Prostate gland (tissue), 2 donors: ENCODE measurements at regions of chr5 and their contacts with region 1.

Region 1: DNA sequence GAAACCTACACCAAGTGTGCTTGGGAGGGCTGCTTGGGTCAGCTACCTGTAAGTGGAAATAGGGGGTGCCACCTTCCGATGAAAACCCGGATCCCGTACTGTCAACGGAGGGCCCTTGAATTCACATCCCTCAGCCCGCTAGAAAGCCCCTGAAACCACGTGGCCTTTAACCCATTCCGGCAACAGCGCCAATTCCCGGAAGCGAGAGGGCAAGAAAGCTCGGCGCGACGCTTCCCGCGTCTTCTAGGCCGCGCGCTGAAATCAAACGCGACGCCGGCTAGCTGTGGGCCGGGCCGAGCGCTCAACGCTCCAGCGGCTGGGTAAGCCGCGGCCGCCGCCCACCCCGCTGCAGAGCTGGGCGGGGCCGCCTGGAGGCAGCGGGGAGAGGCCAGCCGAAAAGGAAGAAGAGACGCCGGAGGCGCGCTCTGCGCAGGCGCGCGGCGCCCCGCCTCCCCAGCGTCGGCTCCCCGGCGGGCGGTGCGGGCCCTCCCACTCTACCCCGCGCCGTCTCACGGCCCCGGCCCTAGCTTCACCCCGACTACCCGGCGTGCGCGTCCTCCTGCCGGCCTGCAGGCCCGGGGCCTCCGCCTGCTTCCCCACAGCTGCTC is at the start of gene KIF2A:
- DNase-seq: peak; percentile 86
- H3K4me3 ChIP-seq: peak within 1 kb of the TSS; percentile 59 to 76
- H3K27ac ChIP-seq: peak within 1 kb of the TSS; percentile 91
- H3K4me1 ChIP-seq: no peaks in the 10 kb centered on the region
- H3K27me3 ChIP-seq: no peaks in the 10 kb centered on the region
- CTCF ChIP-seq: peak in 3 of 4 experiments; percentile 21 to 58 (median 48)
- POLR2A ChIP-seq: peak; percentile 69
- total RNA-seq, gene KIF2A: 20.3 to 43.4 TPM

Region 2: GRCh38 chr5:62354028-62354874 is 48.4 kb after region 1 on chr5:
- intact Hi-C with region 1: loop called (anchors 5 kb)
- DNase-seq: peak; percentile 57
- H3K4me3 ChIP-seq: no peak overlapping the region
- H3K27ac ChIP-seq: no peak overlapping the region
- H3K4me1 ChIP-seq: no peaks in the 10 kb centered on the region
- H3K27me3 ChIP-seq: no peaks in the 10 kb centered on the region
- CTCF ChIP-seq: peak in 3 of 4 experiments; percentile 72 to 85 (median 77)
- POLR2A ChIP-seq: no peak

Region 3: GRCh38 chr5:62489471-62489870 is 183.7 kb after region 1 on chr5:
- intact Hi-C with region 1: no loop called
- DNase-seq: no peak
- H3K4me3 ChIP-seq: no peak overlapping the region
- H3K27ac ChIP-seq: no peak overlapping the region
- H3K4me1 ChIP-seq: no peaks in the 10 kb centered on the region
- H3K27me3 ChIP-seq: no peaks in the 10 kb centered on the region
- CTCF ChIP-seq: no peak
- POLR2A ChIP-seq: no peak